Caco-2 (cell line): ENCODE measurements at regions of chr18 and their contacts with region 1.

Region 1: DNA sequence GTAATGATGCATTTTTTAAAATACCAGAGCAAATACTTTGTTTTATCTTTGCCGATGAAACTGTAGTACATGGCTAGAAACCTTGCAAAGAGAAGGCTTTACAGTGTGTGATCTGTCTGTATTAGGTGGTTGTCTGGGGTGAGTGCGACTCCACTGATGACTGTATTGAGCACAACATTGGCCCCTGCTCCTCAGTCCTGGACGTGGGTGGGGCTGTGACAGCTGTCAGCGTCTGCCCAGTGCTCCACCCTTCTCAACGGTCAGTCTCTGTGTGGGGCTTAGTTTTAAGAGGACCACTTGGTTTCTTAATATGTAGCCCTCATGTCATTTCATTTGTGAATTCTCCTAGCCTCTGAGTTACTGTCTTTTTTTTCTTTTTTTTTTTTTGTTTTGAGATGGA is 17.4 kb upstream of the MOCOS start:
- DNase-seq: no peak
- H3K4me3 ChIP-seq: no peak overlapping the region
- H3K4me3 Mint-ChIP-seq: no peak overlapping the region
- H3K27ac Mint-ChIP-seq: no peak overlapping the region
- H3K4me1 ChIP-seq: no peaks in the 10 kb centered on the region
- H3K4me1 Mint-ChIP-seq: no peaks in the 10 kb centered on the region
- H3K27me3 ChIP-seq: no peaks in the 10 kb centered on the region
- H3K27me3 Mint-ChIP-seq: no peaks in the 10 kb centered on the region
- CTCF ChIP-seq: no peak

Region 2: GRCh38 chr18:36158261-36158867 is 11.6 kb before region 1 on chr18:
- CTCF ChIA-PET with region 1: no interaction called
- POLR2A ChIA-PET with region 1: no interaction called
- intact Hi-C with region 1: no loop called
- DNase-seq: no peak
- H3K4me3 ChIP-seq: no peak overlapping the region
- H3K4me3 Mint-ChIP-seq: no peak overlapping the region
- H3K27ac Mint-ChIP-seq: no peak overlapping the region
- H3K4me1 ChIP-seq: no peaks in the 10 kb centered on the region
- H3K4me1 Mint-ChIP-seq: no peaks in the 10 kb centered on the region
- H3K27me3 ChIP-seq: no peaks in the 10 kb centered on the region
- H3K27me3 Mint-ChIP-seq: no peaks in the 10 kb centered on the region
- CTCF ChIP-seq: no peak

Region 3: GRCh38 chr18:36195427-36196122 is 25.6 kb after region 1 on chr18:
- CTCF ChIA-PET with region 1: no interaction called
- POLR2A ChIA-PET with region 1: no interaction called
- intact Hi-C with region 1: loop called (anchors 2 kb)
- DNase-seq: no peak
- H3K4me3 ChIP-seq: no peak overlapping the region
- H3K4me3 Mint-ChIP-seq: no peak overlapping the region
- H3K27ac Mint-ChIP-seq: no peak overlapping the region
- H3K4me1 ChIP-seq: no peaks in the 10 kb centered on the region
- H3K4me1 Mint-ChIP-seq: no peaks in the 10 kb centered on the region
- H3K27me3 ChIP-seq: no peaks in the 10 kb centered on the region
- H3K27me3 Mint-ChIP-seq: no peaks in the 10 kb centered on the region
- CTCF ChIP-seq: no peak

Region 4: DNA sequence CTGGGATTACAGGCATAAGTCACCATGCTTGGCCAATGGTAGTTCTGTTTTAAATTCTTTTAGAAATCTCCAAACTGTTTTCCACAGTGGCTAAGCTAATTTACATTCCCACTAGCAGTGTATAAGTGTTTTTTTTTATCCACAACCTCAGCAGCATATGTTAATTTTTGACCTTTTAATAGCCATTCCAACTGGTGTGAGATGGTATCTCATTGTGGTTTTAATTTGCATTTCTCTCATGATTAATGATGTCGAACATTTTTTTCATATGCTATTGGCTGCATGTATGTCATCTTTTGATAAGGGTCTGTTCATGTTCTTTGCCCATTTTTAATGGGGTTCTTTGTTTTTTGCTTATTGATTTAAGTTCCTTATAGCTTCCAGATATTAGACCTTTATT is 37.4 kb after region 1 on chr18:
- CTCF ChIA-PET with region 1: no interaction called
- POLR2A ChIA-PET with region 1: no interaction called
- intact Hi-C with region 1: no loop called
- DNase-seq: no peak
- H3K4me3 ChIP-seq: no peak overlapping the region
- H3K4me3 Mint-ChIP-seq: no peak overlapping the region
- H3K27ac Mint-ChIP-seq: no peak overlapping the region
- H3K4me1 ChIP-seq: no peaks in the 10 kb centered on the region
- H3K4me1 Mint-ChIP-seq: no peaks in the 10 kb centered on the region
- H3K27me3 ChIP-seq: no peaks in the 10 kb centered on the region
- H3K27me3 Mint-ChIP-seq: no peaks in the 10 kb centered on the region
- CTCF ChIP-seq: no peak